A549 (cell line): ENCODE measurements at regions of chr19 and their contacts with region 1.

Region 1: DNA sequence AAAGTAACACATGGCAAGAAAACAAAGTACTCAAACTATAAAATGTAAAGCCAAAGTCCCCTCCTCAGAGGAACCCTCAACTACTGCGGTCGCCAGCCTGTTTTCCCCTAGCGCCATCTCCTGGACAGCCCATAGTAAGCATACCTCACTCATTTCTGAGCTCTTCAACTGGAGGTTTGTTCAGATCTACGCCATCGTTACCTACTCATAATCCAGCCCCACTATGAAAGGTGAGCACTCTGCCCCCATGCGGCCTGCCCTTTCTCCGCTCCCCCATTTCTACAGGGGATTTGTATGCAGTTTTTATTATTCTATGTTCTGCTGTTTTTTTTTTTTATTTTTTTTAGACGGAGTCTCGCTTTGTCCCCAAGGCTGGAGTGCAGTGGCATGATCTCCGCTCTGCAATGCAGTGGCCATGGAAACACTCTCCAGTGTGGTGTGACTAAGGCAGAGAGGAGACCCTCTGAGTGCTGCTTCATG is 26.2 kb downstream of the OPA3 start:
- DNase-seq: peak; percentile 81 to 83
- ATAC-seq: peak; percentile 81 to 93
- H3K4me3 ChIP-seq: no peak overlapping the region
- H3K27ac ChIP-seq: no peak overlapping the region
- H3K4me1 ChIP-seq: no peaks in the 10 kb centered on the region
- CTCF ChIP-seq: peak; percentile 74
- EP300 ChIP-seq: no peak
- POLR2A ChIP-seq: no peak
- RAD21 ChIP-seq: peak; percentile 71 to 77

Region 2: DNA sequence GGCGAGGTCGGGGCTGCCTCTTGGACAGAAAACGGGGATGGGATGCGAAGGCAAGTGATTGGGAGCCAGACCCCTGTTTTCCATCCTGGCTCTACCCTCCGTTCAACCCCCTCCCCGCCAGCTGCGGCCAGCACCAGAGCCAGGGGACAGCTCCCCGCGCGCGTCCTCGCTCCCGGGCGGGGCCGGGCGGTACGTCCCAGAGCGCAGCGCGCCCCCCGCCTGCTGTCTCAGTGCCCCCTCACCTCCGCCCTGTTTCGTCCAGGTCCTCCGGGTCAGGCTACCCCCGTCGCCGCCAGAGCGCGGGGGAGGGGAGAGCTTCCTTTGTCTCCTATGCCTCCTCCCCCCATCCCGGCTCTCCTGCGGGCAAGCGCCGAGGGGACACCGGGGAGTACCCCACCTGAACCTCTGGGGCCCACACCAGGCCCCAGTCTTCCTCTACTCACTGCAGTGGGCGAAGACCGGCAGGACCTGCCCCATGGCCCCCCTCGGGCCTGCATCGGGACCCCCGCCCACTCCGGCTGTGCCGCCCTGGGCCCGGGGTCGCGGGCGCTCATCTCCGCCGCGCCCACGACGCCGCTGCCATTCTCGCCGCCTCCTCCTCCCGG is 62.0 kb before region 1 on chr19:
- CTCF ChIA-PET with region 1: interaction called, 12 read pairs
- POLR2A ChIA-PET with region 1: no interaction called
- DNase-seq: no peak
- ATAC-seq: peak; percentile 22 to 46
- H3K4me3 ChIP-seq: peak overlapping the region; percentile 75
- H3K27ac ChIP-seq: peak overlapping the region; percentile 61 to 83; a peak in 5 of 6 replicates
- H3K4me1 ChIP-seq: peaks cover 20% of the 10 kb centered on the region
- CTCF ChIP-seq: no peak
- EP300 ChIP-seq: no peak
- POLR2A ChIP-seq: no peak
- RAD21 ChIP-seq: no peak

Region 3: GRCh38 chr19:45523642-45524256 is 34.7 kb before region 1 on chr19:
- CTCF ChIA-PET with region 1: interaction called, 12 read pairs
- POLR2A ChIA-PET with region 1: no interaction called
- DNase-seq: peak; percentile 94
- ATAC-seq: peak; percentile 92 to 93
- H3K4me3 ChIP-seq: no peak overlapping the region
- H3K27ac ChIP-seq: peak overlapping the region in 1 of 2 experiments; percentile 47; a peak in 1 of 6 replicates
- H3K4me1 ChIP-seq: peaks cover 20% of the 10 kb centered on the region
- CTCF ChIP-seq: peak; percentile 97
- EP300 ChIP-seq: no peak
- POLR2A ChIP-seq: no peak
- RAD21 ChIP-seq: peak; percentile 97 to 98

Region 4: DNA sequence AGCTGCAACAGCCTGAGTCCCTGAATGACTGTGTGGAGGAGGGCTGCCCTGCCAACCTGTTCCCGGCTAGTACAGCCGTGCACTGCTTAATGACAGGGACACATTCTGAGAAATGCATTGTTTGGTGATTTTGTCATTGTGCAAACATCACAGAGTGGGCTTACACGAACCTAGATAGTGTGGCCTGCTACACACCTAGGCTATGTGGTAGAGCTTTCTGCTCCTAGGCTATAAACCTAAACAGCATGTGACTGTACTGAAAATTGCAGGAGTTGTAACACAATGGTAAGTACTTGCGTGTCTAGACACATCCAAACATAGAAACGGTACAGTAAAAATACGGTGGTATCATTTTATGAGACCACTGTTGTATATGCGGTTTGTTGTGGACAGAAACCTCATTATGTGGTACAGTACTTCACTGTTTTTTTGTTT is 16.2 kb before region 1 on chr19:
- CTCF ChIA-PET with region 1: interaction called, 12 read pairs
- POLR2A ChIA-PET with region 1: no interaction called
- DNase-seq: no peak
- ATAC-seq: peak; percentile 59 to 72
- H3K4me3 ChIP-seq: no peak overlapping the region
- H3K27ac ChIP-seq: peak overlapping the region in 1 of 2 experiments; percentile 56; a peak in 3 of 6 replicates
- H3K4me1 ChIP-seq: peaks cover 8% of the 10 kb centered on the region
- CTCF ChIP-seq: no peak
- EP300 ChIP-seq: no peak
- POLR2A ChIP-seq: no peak
- RAD21 ChIP-seq: no peak

Region 5: DNA sequence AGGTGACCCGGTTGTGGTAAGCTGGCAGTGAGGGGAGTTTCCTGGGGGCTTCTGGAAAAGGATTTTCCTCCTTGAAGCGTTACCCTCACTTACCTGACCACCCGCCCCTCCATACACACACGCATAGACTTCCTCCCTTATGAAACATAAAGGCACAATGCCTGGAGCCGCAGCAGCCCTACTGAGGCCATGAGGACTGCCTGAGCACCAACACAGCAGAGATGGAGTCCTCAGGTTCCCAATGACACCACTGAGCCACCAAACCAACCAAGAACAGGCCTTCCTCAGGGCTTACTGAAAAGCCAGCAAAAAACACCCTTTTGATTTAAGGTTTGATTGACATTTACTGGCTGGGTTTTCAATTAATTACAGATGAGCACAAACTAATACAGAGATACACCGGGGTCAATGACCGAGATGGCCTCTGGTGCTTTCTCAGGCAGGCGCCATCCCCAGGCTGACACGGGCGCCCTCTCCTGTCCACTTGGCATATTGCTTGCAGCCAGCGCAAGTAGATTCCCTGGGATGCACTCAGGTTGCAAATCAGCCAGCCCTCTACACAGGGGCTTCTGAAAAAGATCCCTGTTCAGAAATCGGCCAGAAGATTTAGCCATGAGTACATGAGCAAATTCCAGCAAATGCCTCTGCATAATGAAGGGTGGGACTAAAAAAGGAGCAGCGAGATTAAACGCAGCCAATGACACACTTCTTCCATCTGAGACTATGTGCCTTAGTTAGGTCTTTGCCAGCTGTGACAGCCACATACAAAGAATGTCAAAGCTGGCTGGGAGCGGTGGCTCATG is 11.4 kb after region 1 on chr19:
- CTCF ChIA-PET with region 1: interaction called, 55 read pairs
- POLR2A ChIA-PET with region 1: no interaction called
- DNase-seq: peak; percentile 62 to 76
- ATAC-seq: peak; percentile 86 to 91
- H3K4me3 ChIP-seq: no peak overlapping the region
- H3K27ac ChIP-seq: peak overlapping the region; percentile 65 to 83
- H3K4me1 ChIP-seq: peaks cover 26% of the 10 kb centered on the region
- CTCF ChIP-seq: peak; percentile 78
- EP300 ChIP-seq: no peak
- POLR2A ChIP-seq: no peak
- RAD21 ChIP-seq: peak; percentile 75 to 83

Region 6: DNA sequence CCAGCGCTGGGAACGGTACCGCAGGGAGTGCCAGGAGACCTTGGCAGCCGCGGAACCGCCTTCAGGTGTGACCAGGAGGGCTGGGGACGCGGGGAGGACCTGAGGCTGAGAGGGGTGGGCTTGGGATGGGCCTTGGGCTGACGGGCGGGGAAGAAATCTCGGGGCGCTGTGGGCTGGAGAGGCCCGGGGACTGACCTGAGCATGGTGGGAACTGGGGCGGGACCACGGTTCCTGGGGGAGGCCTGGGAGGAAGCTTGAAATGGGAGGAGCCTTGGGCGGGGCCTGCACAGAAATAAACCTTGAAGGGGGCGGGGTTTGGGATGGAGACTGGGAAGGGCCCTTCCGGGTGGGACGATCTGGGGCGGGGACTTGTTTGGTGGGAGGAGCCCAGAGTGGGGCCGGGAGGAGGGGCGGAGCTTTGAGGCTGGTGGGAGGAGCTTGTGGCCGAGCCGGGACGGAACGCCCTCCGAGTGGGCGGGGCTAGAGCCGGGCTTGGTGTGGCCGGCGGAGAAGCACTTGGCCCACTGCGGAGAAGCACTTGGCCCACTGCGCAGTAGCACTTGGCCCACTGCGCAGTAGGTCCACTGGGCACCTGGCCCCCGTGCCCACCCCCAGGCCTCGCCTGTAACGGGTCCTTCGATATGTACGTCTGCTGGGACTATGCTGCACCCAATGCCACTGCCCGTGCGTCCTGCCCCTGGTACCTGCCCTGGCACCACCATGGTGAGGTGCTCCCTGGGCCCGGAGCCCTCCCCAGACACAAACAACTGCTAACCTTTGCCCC is 112.4 kb after region 1 on chr19:
- CTCF ChIA-PET with region 1: no interaction called
- POLR2A ChIA-PET with region 1: no interaction called
- DNase-seq: peak; percentile 97
- ATAC-seq: peak; percentile 33 to 72
- H3K4me3 ChIP-seq: peak overlapping the region; percentile 39
- H3K27ac ChIP-seq: peak overlapping the region; percentile 60 to 76
- H3K4me1 ChIP-seq: peaks cover 27% of the 10 kb centered on the region
- CTCF ChIP-seq: no peak
- EP300 ChIP-seq: no peak
- POLR2A ChIP-seq: no peak
- RAD21 ChIP-seq: no peak